GM12878 (cell line): ENCODE measurements at regions of chr21 and their contacts with region 1.

Region 1: GRCh38 chr21:41926117-41926806 is 27.6 kb downstream of the C2CD2 start:
- DNase-seq: peak; percentile 68
- ATAC-seq: peak; percentile 70
- H3K4me3 ChIP-seq: peak overlapping the region; percentile 81
- H3K27ac ChIP-seq: peak overlapping the region; percentile 99
- H3K4me1 ChIP-seq: peaks cover 68% of the 10 kb centered on the region
- H3K27me3 ChIP-seq: no peaks in the 10 kb centered on the region
- CTCF ChIP-seq: no peak
- EP300 ChIP-seq: no peak
- POLR2A ChIP-seq: peak; percentile 45; the same call in 1 of the 2 replicates
- RAD21 ChIP-seq: no peak

Region 2: DNA sequence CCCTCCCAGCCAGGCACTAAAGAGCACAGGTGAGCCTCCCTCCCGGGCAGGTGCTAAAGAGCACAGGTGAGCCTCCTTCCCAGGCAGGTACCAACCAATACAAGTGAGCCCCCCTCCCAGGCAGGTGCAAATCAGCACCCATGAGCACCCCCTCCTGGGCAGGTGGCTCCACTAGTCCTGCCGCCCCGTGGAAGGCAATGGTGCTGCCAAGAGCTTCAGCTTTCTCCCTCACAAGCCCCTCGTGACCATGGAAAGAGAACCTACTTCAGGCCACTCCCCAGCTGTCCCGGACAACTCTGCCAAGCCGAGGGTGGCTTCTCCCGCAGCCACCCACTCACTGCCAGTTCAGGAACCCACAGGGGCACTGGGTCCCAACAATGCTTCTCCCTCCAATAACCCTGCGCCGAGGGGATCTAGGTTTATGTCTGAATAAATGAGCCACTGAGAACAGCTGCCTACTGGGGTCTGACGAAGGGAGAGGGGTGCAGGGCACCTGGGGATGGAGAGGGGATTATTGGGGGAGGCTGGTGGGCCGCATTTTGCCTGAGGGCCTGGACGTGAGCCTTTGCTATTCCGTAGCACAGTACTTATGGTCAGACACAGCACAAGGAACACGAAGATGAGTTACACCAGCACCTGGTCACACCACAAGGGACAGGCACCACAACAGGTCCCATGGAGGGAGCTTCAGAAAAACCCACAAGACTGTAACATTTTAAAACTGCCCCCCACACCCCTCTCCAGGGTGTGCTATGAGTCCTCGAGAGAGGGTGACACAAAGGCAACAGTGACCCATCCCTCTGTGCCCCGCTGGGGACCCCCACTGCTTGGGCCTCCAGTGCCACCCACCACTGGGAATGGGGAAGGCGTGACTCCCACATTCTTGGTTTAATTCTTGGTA is 93.4 kb before region 1 on chr21:
- CTCF ChIA-PET with region 1: no interaction called
- POLR2A ChIA-PET with region 1: interaction called, 10 read pairs
- RAD21 ChIA-PET with region 1: interaction called, 3 read pairs
- SMC1A ChIA-PET with region 1: interaction called, 3 read pairs
- in situ Hi-C with region 1: no loop called
- intact Hi-C with region 1: no loop called
- DNase-seq: peak; percentile 34
- ATAC-seq: peak; percentile 79
- H3K4me3 ChIP-seq: no peak overlapping the region
- H3K27ac ChIP-seq: peak overlapping the region; percentile 70
- H3K4me1 ChIP-seq: peaks cover 40% of the 10 kb centered on the region
- H3K27me3 ChIP-seq: no peaks in the 10 kb centered on the region
- CTCF ChIP-seq: peak in 2 of 3 experiments; percentile 6 to 11; a peak in 1 of 6 replicates
- EP300 ChIP-seq: no peak
- POLR2A ChIP-seq: peak; percentile 3; the same call in 1 of the 2 replicates
- RAD21 ChIP-seq: no peak

Region 3: GRCh38 chr21:41879190-41879998 is 46.9 kb before region 1 on chr21 and contains the start of gene PRDM15:
- CTCF ChIA-PET with region 1: interaction called, 3 read pairs
- POLR2A ChIA-PET with region 1: interaction called, 28 read pairs
- RAD21 ChIA-PET with region 1: interaction called, 8 read pairs
- SMC1A ChIA-PET with region 1: interaction called, 51 read pairs
- in situ Hi-C with region 1: no loop called
- intact Hi-C with region 1: no loop called
- DNase-seq: no peak
- ATAC-seq: peak; percentile 68
- H3K4me3 ChIP-seq: peak within 1 kb of the TSS; percentile 94
- H3K27ac ChIP-seq: peak within 1 kb of the TSS; percentile 86
- H3K4me1 ChIP-seq: peaks cover 13% of the 10 kb centered on the region
- H3K27me3 ChIP-seq: no peaks in the 10 kb centered on the region
- CTCF ChIP-seq: no peak
- EP300 ChIP-seq: no peak
- POLR2A ChIP-seq: peak; percentile 82
- RAD21 ChIP-seq: no peak
- polyA plus RNA-seq, gene PRDM15: 2.2 to 2.8 TPM

Region 4: GRCh38 chr21:41953831-41954653 is 27.8 kb after region 1 on chr21 and contains the start of gene C2CD2:
- CTCF ChIA-PET with region 1: interaction called, 4 read pairs
- POLR2A ChIA-PET with region 1: interaction called, 7 read pairs
- RAD21 ChIA-PET with region 1: interaction called, 7 read pairs
- SMC1A ChIA-PET with region 1: interaction called, 25 read pairs
- in situ Hi-C with region 1: no loop called
- intact Hi-C with region 1: no loop called
- DNase-seq: no peak
- ATAC-seq: peak; percentile 65
- H3K4me3 ChIP-seq: peak within 1 kb of the TSS; percentile 78
- H3K27ac ChIP-seq: peak within 1 kb of the TSS; percentile 48
- H3K4me1 ChIP-seq: peaks cover 37% of the 10 kb centered on the region
- H3K27me3 ChIP-seq: no peaks in the 10 kb centered on the region
- CTCF ChIP-seq: no peak
- EP300 ChIP-seq: no peak; a peak in 1 of 4 replicates
- POLR2A ChIP-seq: peak; percentile 56
- RAD21 ChIP-seq: no peak
- polyA plus RNA-seq, gene C2CD2: 2.2 to 2.9 TPM

Region 5: DNA sequence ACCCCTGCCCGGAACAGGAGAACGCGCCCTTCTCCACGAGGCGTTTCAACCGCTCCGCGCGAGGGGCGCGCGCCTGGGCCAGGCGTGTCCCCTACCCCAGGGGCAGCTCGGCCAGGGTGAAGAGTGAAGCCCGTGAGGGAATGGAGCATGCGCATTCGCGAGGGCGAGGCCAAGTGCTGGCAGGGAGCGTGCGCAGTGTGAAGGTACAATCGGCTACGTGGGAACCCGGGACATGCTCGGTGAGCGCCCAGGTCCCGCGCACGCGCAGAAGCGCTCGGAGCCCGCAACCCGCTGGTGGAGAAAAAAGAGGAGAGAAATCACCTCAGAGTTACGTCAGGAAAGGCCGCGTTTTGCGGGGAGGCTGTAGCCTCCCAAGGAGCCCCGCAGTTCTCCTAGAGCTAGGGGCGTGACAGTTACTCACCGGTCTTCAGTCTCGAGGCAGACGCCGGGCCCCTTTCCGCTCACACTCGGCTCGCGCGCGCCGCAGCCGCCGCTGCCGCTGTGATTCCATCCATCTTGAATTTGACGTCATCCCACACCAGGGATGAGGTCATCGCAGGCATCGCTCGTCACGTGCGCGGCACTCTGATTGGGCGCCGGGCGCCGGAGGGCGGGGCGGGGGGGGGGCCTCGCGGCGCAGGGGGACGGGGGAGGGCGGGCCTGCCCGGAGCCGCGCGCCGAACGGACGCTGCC is 83.7 kb after region 1 on chr21 and contains the start of gene ZBTB21:
- CTCF ChIA-PET with region 1: interaction called, 10 read pairs
- POLR2A ChIA-PET with region 1: interaction called, 13 read pairs
- RAD21 ChIA-PET with region 1: interaction called, 12 read pairs
- SMC1A ChIA-PET with region 1: interaction called, 41 read pairs
- in situ Hi-C with region 1: no loop called
- intact Hi-C with region 1: loop called (anchors 2 kb)
- DNase-seq: peak; percentile 96
- ATAC-seq: peak; percentile 89
- H3K4me3 ChIP-seq: peak within 1 kb of the TSS; percentile 81
- H3K27ac ChIP-seq: peak within 1 kb of the TSS; percentile 96
- H3K4me1 ChIP-seq: peaks cover 5% of the 10 kb centered on the region
- H3K27me3 ChIP-seq: no peaks in the 10 kb centered on the region
- CTCF ChIP-seq: no peak
- EP300 ChIP-seq: peak in 1 of 2 experiments; percentile 27; a peak in 1 of 4 replicates
- POLR2A ChIP-seq: peak; percentile 79
- RAD21 ChIP-seq: no peak
- polyA plus RNA-seq, gene ZBTB21: 1.8 to 2.3 TPM

Region 6: DNA sequence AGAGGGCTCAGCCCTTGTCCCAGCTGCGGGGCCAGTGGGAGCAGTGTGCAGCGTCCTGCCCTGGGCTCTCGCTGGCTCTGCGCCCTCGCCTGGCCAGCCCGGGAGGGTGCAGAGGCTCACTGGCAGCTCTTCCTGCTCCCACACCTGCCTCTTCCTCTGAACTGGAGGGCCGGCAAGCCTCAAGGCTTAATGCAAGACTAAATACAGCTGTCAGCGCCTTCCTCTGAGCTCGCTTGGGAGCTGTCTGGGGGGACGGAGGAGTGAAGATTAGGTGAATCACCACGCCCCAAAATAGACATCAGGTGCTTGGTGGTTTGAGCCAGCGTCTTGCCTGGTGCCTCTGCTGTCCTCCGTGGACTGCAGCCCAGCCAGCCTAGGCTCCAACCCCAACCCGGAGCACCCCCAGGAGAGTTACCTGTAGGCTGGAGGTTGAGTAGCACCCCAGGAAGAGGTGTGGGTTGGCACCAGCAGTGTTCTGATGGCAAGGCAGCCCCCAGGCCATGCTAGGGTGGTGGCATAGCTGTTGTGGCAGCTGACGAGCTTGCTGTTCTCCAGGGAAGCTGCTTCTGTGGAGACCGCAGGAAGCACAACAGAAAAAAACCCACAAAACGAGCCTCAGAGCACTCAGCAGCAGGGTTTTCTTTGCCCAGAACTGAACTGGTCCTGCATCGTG is 181.8 kb after region 1 on chr21:
- CTCF ChIA-PET with region 1: interaction called, 15 read pairs
- POLR2A ChIA-PET with region 1: no interaction called
- RAD21 ChIA-PET with region 1: interaction called, 5 read pairs
- SMC1A ChIA-PET with region 1: interaction called, 5 read pairs
- in situ Hi-C with region 1: no loop called
- intact Hi-C with region 1: loop called (anchors 10 kb)
- DNase-seq: no peak
- ATAC-seq: peak; percentile 98
- H3K4me3 ChIP-seq: no peak overlapping the region
- H3K27ac ChIP-seq: no peak overlapping the region
- H3K4me1 ChIP-seq: peaks cover 12% of the 10 kb centered on the region
- H3K27me3 ChIP-seq: peaks cover 1 to 2% of the 10 kb centered on the region in 2 experiments; a peak in 2 of 4 replicates
- CTCF ChIP-seq: peak; percentile 62 to 83 (median 77)
- EP300 ChIP-seq: no peak
- POLR2A ChIP-seq: no peak
- RAD21 ChIP-seq: peak; percentile 53